HEK293 (cell line): ENCODE measurements at regions of chr22 and their contacts with region 1.

Region 1: GRCh38 chr22:31977141-31977841 is 33.0 kb downstream of the YWHAH start:
- H3K4me3 ChIP-seq: no peak overlapping the region
- H3K27ac ChIP-seq: no peak overlapping the region
- H3K4me1 ChIP-seq: no peaks in the 10 kb centered on the region
- CTCF ChIP-seq: peak; percentile 93

Region 2: DNA sequence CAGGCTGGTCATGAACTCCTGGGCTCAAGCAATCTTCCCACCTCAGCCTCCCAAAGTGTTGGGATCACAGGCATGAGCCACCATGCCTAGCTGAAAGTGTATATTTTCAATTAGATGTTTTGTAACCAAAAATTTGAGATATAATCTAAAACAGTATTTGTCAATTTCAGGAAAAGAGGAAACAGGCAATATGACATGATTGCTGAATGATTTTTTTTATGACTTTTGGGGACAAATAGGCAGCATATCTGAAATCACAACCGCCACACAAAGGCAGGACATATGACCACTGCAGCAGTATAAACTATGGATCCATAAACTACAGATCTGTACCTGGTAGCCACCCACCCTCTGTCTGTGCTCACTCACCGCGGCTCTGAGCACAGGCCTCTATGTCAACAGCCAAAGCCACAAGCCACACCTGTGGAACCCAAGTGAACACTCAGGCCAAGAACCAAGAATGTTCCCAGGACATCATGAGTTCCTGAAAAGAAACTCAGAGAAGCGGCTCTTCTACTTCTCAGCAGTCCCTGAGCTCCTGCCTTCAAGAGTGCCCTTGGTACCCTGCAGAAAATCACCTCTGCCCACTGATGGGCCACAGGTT is 337.8 kb before region 1 on chr22:
- CTCF ChIA-PET with region 1: no interaction called
- POLR2A ChIA-PET with region 1: no interaction called
- H3K4me3 ChIP-seq: no peak overlapping the region
- H3K27ac ChIP-seq: no peak overlapping the region
- H3K4me1 ChIP-seq: no peaks in the 10 kb centered on the region
- CTCF ChIP-seq: no peak

Region 3: DNA sequence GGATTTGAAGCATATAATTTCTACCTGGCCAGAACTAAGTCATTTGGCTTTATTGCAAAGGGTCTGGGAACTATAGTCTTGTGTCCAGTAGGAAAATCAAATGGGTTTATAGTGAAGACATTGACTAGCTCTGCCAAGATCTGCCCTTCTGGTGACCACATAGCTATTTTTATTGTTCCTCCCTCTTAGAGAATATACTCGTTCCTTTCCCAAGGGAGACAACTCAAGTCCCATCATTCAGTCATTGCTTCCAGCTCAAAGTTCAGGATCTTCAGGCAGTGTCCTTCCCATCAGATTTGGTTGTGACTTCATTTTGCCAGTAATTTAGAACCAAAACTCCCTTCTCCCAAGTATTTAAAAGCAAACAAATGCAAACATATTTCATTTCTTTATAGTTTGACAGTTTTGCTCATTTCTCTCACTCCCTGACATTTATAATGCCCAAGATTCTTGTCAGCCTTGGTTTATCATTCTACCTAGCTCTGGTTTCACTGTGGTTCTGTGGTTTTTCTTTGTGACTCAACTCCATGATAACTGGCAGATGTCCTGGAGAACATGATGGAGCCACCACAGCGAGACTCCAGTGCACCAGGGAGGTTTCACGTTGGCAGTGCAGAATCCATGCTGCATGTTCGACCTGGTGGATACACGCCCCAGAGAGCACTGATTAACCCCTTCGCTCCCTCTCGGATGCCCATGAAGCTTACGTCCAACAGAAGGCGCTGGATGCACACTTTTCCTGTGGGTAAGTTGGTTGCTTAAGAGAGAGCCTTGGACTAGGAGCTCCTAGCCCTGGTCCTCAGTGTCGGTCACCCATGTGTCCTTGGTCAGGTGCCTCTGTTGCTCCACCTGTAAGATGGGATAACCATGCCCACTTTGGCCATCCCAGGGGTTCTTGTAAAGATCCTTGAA is 158.6 kb before region 1 on chr22:
- CTCF ChIA-PET with region 1: no interaction called
- POLR2A ChIA-PET with region 1: no interaction called
- H3K4me3 ChIP-seq: no peak overlapping the region
- H3K27ac ChIP-seq: no peak overlapping the region
- H3K4me1 ChIP-seq: no peaks in the 10 kb centered on the region
- CTCF ChIP-seq: no peak

Region 4: DNA sequence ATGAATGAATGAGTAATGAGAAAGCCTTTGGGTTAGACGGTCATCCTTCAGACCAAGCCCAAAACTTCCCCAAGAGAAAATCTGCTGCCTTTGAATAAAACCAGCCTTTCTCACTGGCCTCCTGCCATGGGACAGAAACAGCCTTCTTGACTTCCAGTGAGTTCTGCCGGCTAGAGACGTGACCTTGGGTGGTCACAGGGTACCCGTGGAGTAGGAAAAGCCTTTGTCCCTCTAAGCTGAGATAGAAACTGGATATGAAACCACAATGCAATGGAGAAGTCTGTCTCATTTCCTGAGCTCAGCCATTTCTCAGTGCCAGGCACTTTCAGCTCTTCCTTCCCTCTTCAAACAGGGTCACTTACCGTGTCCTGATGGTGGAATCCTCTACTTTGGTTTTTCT is 54.2 kb before region 1 on chr22:
- CTCF ChIA-PET with region 1: no interaction called
- POLR2A ChIA-PET with region 1: no interaction called
- H3K4me3 ChIP-seq: no peak overlapping the region
- H3K27ac ChIP-seq: no peak overlapping the region
- H3K4me1 ChIP-seq: no peaks in the 10 kb centered on the region
- CTCF ChIP-seq: no peak

Region 5: DNA sequence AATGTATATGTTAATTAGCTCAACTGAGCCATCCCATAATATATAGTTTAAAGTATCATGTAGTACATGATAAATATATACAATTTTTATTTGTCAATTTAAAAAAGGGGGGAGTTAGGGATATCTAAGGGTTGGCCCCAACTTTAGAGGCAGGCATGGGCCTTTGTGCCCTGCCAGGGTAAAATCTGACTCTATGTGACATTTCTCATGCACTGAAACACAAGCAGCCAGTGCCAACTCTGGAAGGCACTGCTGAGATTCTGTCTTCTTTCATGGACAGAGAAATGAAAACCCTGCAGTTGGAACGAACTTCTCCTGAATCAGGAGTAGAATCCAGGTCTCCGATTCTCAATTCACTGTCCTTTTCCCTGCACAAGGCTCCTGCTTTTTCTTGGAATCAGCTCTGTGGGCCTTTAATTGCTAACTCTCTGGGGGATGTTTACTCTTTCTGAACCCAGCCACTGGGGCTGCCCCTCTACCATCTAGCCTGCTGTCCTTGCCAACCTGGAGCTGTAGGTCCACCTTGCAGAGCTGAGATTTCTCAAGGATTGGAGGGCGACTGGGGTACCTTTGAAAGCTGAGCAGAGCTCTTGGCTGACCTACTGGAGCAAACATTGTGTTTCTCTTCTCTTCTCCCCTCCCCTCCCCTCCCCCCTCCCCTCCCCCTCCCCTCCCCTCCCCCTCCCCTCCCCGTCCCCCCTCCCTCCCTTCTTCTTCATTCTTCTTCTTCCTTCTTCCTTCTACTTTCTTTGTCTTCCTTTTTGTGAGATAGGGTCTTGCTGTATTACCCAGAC is 92.5 kb after region 1 on chr22:
- CTCF ChIA-PET with region 1: interaction called, 309 read pairs
- POLR2A ChIA-PET with region 1: no interaction called
- H3K4me3 ChIP-seq: no peak overlapping the region
- H3K27ac ChIP-seq: no peak overlapping the region
- H3K4me1 ChIP-seq: no peaks in the 10 kb centered on the region
- CTCF ChIP-seq: no peak